Cardiac septum (tissue), 1 donor: ENCODE measurements at regions of chr3 and their contacts with region 1.

Region 1: GRCh38 chr3:170357176-170357919 is at the start of gene SKIL:
- DNase-seq: peak; percentile 99
- total RNA-seq, gene SKIL: 37.3 TPM

Region 2: GRCh38 chr3:169764452-169765274 is 592.7 kb before region 1 on chr3 and contains the start of gene TERC:
- intact Hi-C with region 1: loop called (anchors 10 kb)
- DNase-seq: peak; percentile 95
- total RNA-seq, gene TERC: 0.86 TPM

Region 3: DNA sequence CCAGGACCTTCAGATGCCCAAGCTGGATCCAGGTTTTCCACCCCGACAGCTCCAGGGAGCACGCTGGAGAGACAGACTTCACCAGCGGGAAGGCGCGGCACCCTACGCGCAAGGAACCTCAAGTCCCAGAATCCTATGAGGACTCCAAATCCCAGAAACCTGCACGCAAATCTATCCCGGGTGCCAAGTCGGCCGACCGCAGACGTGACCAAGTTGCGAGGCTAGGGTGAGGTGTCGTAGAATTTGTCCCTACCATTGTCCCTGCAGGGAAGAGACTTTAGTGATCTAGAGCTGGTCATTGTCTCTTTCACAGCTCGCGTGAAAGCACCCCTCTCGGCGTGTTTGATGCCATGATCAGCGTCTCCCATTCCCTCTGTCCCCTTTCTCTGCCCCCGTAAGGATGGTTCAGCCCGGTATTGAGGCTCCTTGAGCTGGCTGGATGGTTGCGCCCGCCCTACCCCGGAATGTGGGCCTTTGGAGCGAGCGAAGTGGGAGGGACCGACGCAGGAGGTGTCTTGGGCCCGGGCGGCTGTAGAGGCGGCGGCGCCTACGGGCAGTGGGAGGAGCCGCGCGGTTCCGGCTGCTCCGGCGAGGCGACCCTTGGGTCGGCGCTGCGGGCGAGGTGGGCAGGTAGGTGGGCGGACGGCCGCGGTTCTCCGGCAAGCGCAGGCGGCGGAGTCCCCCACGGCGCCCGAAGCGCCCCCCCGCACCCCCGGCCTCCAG is 135.3 kb before region 1 on chr3 and contains the start of gene PRKCI:
- intact Hi-C with region 1: loop called (anchors 5 kb)
- DNase-seq: peak; percentile 97
- total RNA-seq, gene PRKCI: 14.3 TPM

Region 4: DNA sequence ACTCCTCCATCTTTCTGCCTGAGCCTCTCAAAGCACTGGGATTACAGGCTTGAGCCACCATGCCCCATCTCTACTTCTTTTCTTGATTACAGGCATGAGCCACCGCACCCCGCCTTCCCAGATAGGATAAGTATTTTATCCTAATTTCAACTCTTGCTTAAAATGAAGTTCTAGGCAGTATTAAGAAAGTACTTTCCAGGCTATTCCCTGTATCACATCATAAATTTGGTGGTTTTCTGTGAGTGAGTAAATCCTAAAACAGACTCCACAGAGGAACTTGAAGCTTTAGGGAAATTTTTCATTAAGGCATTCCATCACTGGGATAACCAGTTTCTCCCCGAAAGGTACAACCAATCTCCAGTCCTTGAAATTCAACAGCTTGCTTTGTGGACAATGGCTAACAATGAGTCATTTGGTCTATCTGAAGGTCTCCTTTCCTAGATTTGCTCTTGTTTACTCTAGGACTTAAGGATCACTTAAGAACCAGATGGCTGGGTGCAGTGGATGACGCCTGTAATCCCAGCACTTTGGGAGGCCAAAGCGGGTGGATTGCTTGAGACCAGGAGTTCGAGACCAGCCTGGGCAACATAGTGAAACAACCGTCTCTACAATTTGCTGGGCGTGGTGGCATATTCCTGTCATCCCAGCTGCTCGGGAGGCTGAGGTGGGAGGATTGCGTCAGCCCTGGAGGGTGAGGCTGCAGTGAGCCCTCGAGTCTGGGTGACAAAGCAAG is 49.5 kb before region 1 on chr3:
- intact Hi-C with region 1: loop called (anchors 5 kb)
- DNase-seq: no peak

Region 5: DNA sequence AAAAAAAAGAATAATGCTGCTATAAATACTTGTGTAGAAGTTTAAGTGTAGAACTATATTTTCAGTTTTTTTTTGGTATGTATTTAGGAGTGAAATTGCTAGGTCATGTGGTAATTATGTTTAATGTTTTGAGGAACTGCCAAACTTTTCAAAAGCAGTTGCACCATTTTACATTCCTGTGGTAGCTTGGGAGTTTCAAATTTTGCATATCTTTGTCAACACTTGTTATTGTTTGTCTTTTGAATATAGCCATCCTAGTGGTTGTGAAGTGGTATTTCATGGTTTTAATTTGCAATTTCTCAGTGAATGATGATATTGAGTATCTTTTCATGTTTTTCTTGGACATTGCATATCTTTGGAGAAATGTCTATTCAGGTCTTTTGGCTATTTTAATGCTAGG is 30.6 kb after region 1 on chr3:
- intact Hi-C with region 1: no loop called
- DNase-seq: no peak